Gastrocnemius medialis (tissue), 4 donors: ENCODE measurements at regions of chr3 and their contacts with region 1.

Region 1: DNA sequence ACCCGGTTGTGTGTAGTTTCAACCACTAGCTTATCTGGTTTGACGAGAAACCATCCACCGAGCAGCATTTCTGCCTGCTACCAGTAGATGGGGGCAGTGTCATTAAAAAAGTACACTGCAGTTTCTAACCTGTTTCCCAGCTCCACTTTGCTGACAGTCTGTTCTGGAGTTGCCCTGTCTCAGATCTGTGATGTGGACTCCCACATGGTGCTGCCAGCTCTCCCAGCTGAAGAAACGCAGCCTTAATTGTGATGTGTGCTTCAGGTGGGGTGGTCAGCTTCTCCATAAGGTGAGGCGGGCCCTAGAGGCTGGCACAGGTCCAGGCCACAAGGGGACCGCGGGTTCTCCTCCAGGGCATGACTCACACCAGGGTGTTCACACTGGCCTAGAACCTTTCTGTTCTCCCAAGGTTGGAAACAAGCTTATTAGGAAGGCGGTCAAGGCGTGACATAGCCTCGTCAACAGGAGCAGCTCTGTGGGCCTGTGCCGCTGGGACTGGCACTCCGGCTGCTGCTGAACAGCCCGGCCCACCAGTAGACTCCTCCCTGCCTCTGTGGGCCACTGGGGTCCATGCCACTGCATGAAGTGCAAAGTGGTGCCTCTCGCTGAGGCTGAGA is 2.9 kb upstream of the FAM43A start:
- DNase-seq: peak; percentile 45 to 63
- ATAC-seq: peak; percentile 74 to 81
- H3K4me3 ChIP-seq: no peak overlapping the region
- H3K27ac ChIP-seq: peak overlapping the region; percentile 41 to 65 (median 50)
- H3K4me1 ChIP-seq: peaks cover 24 to 29% of the 10 kb centered on the region in 2 donors
- H3K27me3 ChIP-seq: no peaks in the 10 kb centered on the region
- CTCF ChIP-seq: peak; percentile 80 to 89 (median 85)
- POLR2A ChIP-seq: no peak

Region 2: GRCh38 chr3:194654443-194654842 is 28.4 kb before region 1 on chr3:
- in situ Hi-C with region 1: no loop called
- intact Hi-C with region 1: no loop called
- DNase-seq: no peak
- ATAC-seq: no peak
- H3K4me3 ChIP-seq: no peak overlapping the region
- H3K27ac ChIP-seq: no peak overlapping the region
- H3K4me1 ChIP-seq: peaks cover 0 to 4% of the 10 kb centered on the region in 2 donors
- H3K27me3 ChIP-seq: no peaks in the 10 kb centered on the region
- CTCF ChIP-seq: no peak
- POLR2A ChIP-seq: no peak

Region 3: GRCh38 chr3:194671900-194672808 is 10.6 kb before region 1 on chr3 and contains the start of gene LSG1:
- in situ Hi-C with region 1: no loop called
- intact Hi-C with region 1: loop called (anchors 2 kb)
- DNase-seq: peak; percentile 84 to 88
- ATAC-seq: peak; percentile 98
- H3K4me3 ChIP-seq: peak within 1 kb of the TSS; percentile 66 to 95 (median 87)
- H3K27ac ChIP-seq: peak within 1 kb of the TSS; percentile 83 to 91 (median 88)
- H3K4me1 ChIP-seq: peaks cover 32 to 33% of the 10 kb centered on the region in 2 donors
- H3K27me3 ChIP-seq: no peaks in the 10 kb centered on the region
- CTCF ChIP-seq: no peak
- POLR2A ChIP-seq: peak; percentile 49 to 64
- total RNA-seq, gene LSG1: 23.2 to 38.4 (median 28.0) TPM

Region 4: DNA sequence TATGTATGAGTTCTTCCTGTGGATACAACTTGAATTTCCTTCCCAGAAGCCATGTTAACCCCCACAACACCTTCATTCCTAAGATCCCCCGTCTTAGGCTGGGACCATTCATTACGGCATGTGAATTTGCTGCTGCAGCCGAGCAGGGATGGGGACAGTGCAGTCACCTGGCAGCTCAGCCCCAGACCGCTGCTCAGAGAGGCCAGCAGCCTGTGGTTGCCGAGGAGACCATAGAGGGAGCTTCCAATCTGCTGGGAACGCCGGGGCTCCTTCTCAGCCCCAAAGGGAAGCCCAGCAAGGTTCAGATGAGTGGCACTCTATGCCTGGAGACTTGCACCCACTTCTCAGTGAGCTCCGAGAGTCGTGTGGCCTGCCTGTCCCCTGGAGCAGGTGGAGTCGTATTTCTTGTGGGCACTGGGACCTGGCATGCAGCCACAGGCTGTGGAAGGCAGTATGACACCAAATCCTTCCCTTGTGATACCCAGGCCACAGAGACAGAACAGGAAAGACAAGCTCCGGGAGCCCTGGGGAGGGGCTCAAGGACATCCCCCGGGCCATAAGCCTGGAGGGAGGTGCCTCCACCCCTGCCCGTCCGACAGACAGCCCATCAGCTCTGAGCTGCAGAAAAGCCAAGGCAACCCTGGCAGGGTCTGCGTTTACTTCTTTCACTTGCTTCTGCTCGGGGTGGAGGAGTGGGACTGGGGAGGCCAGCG is 170.2 kb after region 1 on chr3:
- in situ Hi-C with region 1: loop called in 1 of 4 experiments (anchors 10 kb)
- intact Hi-C with region 1: loop called (anchors 2 kb)
- DNase-seq: peak; percentile 77
- ATAC-seq: peak; percentile 77 to 82
- H3K4me3 ChIP-seq: no peak overlapping the region
- H3K27ac ChIP-seq: peak overlapping the region; percentile 34 to 80 (median 58)
- H3K4me1 ChIP-seq: peaks cover 22 to 39% of the 10 kb centered on the region in 2 donors
- H3K27me3 ChIP-seq: no peaks in the 10 kb centered on the region
- CTCF ChIP-seq: no peak
- POLR2A ChIP-seq: no peak

Region 5: DNA sequence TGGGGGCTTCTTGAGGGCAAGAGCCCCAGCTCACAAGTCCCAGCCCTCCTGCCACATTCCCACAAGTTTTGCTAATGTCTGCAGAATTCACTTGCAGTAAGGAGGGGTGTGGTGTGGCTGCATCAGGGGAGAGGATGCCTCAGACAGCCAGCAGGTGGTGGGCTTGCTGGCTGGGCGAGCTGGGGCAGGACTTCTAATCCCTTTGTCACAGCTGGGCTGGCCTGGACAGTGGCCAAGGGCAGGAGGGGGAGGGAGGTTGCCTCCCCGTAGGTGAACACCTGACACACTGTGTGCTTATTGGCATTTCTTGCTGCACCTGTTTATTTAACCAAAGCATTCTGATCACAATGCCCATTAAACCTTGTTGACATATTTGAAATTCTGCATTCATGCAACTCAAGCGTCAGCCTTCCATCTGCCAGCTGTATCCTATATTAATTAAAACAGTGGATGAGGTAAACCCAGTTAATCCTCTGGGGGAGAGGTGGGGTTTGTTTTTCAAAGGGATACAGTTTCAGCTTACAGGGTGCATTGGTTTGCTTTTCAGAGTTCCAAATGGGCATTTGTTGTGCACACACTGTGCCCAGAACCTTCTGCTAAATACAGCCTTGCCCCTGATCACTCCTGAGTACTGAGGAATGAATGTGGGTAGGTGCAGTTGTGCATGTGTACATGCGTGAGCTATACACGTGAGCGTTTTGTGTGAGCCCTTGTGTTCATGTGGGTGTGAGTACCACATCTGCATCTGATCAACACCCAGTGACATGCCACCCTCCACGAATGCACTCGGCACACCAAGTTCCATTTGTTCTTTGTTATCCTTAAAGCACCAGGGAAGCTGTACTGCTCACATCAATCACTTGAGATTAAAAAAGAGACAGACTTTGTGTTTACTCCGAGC is 319.4 kb after region 1 on chr3:
- in situ Hi-C with region 1: no loop called
- intact Hi-C with region 1: loop called (anchors 5 kb)
- DNase-seq: peak in 1 of 2 donors; percentile 24
- ATAC-seq: peak; percentile 33 to 42
- H3K4me3 ChIP-seq: no peak overlapping the region
- H3K27ac ChIP-seq: peak overlapping the region; percentile 25 to 52 (median 39)
- H3K4me1 ChIP-seq: peaks cover 22% of the 10 kb centered on the region in 2 donors
- H3K27me3 ChIP-seq: no peaks in the 10 kb centered on the region
- CTCF ChIP-seq: peak; percentile 41 to 67 (median 51)
- POLR2A ChIP-seq: no peak

Region 6: GRCh38 chr3:195117978-195118581 is 435.3 kb after region 1 on chr3:
- in situ Hi-C with region 1: loop called in 1 of 4 experiments (anchors 10 kb)
- intact Hi-C with region 1: no loop called
- DNase-seq: no peak
- ATAC-seq: no peak
- H3K4me3 ChIP-seq: no peak overlapping the region
- H3K27ac ChIP-seq: peak overlapping the region in 1 of 4 donors; percentile 48
- H3K4me1 ChIP-seq: no peaks in the 10 kb centered on the region
- H3K27me3 ChIP-seq: no peaks in the 10 kb centered on the region
- CTCF ChIP-seq: no peak
- POLR2A ChIP-seq: no peak

Region 7: GRCh38 chr3:195271116-195271858 is 588.5 kb after region 1 on chr3 and contains the start of gene XXYLT1:
- in situ Hi-C with region 1: loop called (anchors 5 to 10 kb)
- intact Hi-C with region 1: no loop called
- DNase-seq: peak; percentile 70 to 81
- ATAC-seq: peak; percentile 93 to 96
- H3K4me3 ChIP-seq: peak within 1 kb of the TSS; percentile 73 to 96 (median 85)
- H3K27ac ChIP-seq: peak within 1 kb of the TSS; percentile 78 to 95 (median 87)
- H3K4me1 ChIP-seq: peaks cover 15 to 19% of the 10 kb centered on the region in 2 donors
- H3K27me3 ChIP-seq: no peaks in the 10 kb centered on the region
- CTCF ChIP-seq: peak; percentile 84 to 94 (median 90)
- POLR2A ChIP-seq: no peak
- total RNA-seq, gene XXYLT1: 0.87 to 3.1 (median 1.3) TPM

Region 8: GRCh38 chr3:195522254-195523023 is 839.6 kb after region 1 on chr3:
- in situ Hi-C with region 1: loop called (anchors 10 to 25 kb)
- intact Hi-C with region 1: no loop called
- DNase-seq: no peak
- ATAC-seq: no peak
- H3K4me3 ChIP-seq: no peak overlapping the region
- H3K27ac ChIP-seq: no peak overlapping the region
- H3K4me1 ChIP-seq: peaks cover 0 to 3% of the 10 kb centered on the region in 2 donors
- H3K27me3 ChIP-seq: no peaks in the 10 kb centered on the region
- CTCF ChIP-seq: peak; percentile 65 to 76 (median 74)
- POLR2A ChIP-seq: no peak